ENCODE measurements at regions of chr4 and their contacts with region 1.

Region 1: DNA sequence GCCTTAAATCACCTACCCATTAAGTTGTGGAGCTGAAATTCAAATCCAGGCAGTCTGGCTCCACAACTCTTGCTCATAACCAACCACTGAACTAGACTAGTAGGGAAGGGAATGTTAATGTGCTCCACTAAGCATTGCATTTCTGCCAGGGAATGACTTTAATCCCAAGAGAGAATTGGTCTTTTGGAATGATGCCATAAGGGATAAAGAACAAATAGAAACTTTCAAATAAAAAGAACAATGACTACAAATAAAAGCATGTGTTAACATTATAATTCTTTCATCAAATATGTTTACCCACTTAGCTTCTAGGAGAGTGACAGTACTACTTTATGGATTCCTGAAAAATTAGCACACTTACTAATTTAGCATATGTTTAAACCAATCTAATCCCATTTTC is 905.9 kb downstream of the CENPC start:
- DNase-seq: no peak
- H3K4me3 Mint-ChIP-seq: no peak overlapping the region
- H3K27ac Mint-ChIP-seq: no peak overlapping the region
- H3K4me1 Mint-ChIP-seq: no peaks in the 10 kb centered on the region
- H3K27me3 Mint-ChIP-seq: no peaks in the 10 kb centered on the region

Region 2: DNA sequence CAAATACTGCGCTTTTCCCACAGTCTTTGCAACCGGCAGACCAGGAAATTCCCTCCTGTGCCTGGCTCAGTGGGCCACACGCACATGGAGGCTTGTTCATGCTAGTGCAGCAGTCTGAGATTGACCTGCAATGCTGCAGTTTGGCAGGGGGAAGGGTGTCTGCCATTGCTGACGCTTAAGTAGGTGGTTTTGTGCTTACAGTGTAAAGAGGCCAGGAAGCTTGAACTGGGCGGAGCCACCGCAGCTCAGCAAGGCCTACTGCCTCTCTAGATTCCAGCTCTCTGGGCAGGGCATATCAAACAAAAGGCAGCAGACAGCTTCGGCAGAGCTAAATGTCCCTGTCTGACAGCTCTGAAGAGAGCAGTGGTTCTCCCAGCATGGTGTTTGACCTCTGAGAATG is 1839.6 kb before region 1 on chr4:
- CTCF ChIA-PET with region 1: no interaction called
- intact Hi-C with region 1: loop called (anchors 5 kb)
- DNase-seq: no peak
- H3K4me3 Mint-ChIP-seq: no peak overlapping the region
- H3K27ac Mint-ChIP-seq: no peak overlapping the region
- H3K4me1 Mint-ChIP-seq: no peaks in the 10 kb centered on the region
- H3K27me3 Mint-ChIP-seq: no peaks in the 10 kb centered on the region

Measured in activated naive CD4-positive, alpha-beta T cell treated with anti-CD3 and anti-CD28 coated beads for 36 hours (primary cell).